Heart right ventricle (tissue), 16 donors: ENCODE measurements at regions of chr6 and their contacts with region 1.

Region 1: DNA sequence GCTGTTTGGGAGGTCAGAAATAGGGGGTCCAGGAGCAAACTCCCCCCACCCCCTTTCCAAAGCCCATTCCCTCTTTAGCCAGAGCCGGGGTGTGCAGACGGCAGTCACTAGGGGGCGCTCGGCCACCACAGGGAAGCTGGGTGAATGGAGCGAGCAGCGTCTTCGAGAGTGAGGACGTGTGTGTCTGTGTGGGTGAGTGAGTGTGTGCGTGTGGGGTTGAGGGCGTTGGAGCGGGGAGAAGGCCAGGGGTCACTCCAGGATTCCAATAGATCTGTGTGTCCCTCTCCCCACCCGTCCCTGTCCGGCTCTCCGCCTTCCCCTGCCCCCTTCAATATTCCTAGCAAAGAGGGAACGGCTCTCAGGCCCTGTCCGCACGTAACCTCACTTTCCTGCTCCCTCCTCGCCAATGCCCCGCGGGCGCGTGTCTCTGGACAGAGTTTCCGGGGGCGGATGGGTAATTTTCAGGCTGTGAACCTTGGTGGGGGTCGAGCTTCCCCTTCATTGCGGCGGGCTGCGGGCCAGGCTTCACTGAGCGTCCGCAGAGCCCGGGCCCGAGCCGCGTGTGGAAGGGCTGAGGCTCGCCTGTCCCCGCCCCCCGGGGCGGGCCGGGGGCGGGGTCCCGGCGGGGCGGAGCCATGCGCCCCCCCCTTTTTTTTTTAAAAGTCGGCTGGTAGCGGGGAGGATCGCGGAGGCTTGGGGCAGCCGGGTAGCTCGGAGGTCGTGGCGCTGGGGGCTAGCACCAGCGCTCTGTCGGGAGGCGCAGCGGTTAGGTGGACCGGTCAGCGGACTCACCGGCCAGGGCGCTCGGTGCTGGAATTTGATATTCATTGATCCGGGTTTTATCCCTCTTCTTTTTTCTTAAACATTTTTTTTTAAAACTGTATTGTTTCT is at the start of gene VEGFA:
- DNase-seq: peak; percentile 91 to 93
- ATAC-seq: peak; percentile 70 to 86 (median 80)
- H3K4me3 ChIP-seq: peak within 1 kb of the TSS; percentile 85 to 98 (median 94)
- H3K27ac ChIP-seq: peak within 1 kb of the TSS; percentile 86 to 99 (median 95)
- H3K4me1 ChIP-seq: peaks cover 3 to 45% (median 37%) of the 10 kb centered on the region in 9 donors
- H3K27me3 ChIP-seq: no peaks in the 10 kb centered on the region
- CTCF ChIP-seq: peak; percentile 94 to 99 (median 97)
- total RNA-seq, gene VEGFA: 163 to 456 (median 216) TPM

Region 2: GRCh38 chr6:43667245-43668150 is 102.3 kb before region 1 on chr6:
- intact Hi-C with region 1: loop called in 4 of 10 experiments (anchors 2 to 5 kb)
- DNase-seq: peak; percentile 83 to 85
- ATAC-seq: peak; percentile 49 to 75 (median 59)
- H3K4me3 ChIP-seq: peak overlapping the region in 3 of 10 donors; percentile 15 to 24 (median 22)
- H3K27ac ChIP-seq: peak overlapping the region in 8 of 10 donors; percentile 19 to 85 (median 80)
- H3K4me1 ChIP-seq: peaks cover 26 to 47% (median 41%) of the 10 kb centered on the region in 9 donors
- H3K27me3 ChIP-seq: no peaks in the 10 kb centered on the region
- CTCF ChIP-seq: peak; percentile 85 to 98 (median 95)

Region 3: GRCh38 chr6:43723737-43724295 is 46.0 kb before region 1 on chr6:
- intact Hi-C with region 1: loop called in 5 of 10 experiments (anchors 5 kb)
- DNase-seq: peak; percentile 60 to 65
- ATAC-seq: peak; percentile 71 to 87 (median 78)
- H3K4me3 ChIP-seq: no peak overlapping the region
- H3K27ac ChIP-seq: peak overlapping the region in 1 of 10 donors; percentile 26
- H3K4me1 ChIP-seq: peaks cover 0 to 28% (median 9%) of the 10 kb centered on the region in 9 donors
- H3K27me3 ChIP-seq: no peaks in the 10 kb centered on the region
- CTCF ChIP-seq: peak; percentile 41 to 77 (median 68)

Region 4: DNA sequence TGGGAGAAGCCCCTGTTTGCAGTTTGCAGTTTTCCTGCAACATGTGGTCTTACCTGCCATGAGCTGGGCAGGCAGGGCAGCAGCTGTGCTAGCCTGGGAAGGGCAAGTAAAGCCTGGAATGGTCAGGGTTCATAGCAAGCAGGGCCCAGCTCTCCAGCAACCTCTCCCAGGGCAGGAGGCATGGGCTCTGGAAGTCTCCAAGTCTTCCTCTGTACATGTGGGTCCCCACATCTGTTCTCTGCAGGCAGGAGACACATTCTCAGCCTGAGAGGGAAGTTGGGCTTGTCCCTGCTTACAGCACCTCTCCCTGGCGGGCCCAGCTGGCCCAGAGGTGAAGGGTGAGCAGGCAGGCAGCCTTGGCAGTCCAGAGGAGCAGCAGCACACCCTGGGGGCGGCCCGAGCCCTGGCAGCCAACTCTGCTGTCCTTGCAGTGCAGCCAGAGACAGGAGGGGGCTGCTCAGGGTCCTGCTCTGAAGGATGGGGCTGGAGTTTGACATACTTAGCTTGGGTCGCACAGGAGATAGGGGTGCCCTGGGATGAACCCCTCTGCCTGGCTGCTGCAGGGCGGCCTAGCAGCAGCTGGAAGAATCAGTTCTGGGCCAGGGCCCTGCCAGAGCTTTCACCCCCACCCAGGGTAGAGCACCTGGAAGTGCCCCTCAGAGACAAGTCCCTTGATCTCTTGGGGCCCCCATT is 181.4 kb after region 1 on chr6:
- intact Hi-C with region 1: loop called in 7 of 10 experiments (anchors 1 to 5 kb)
- DNase-seq: peak; percentile 45 to 68
- ATAC-seq: peak; percentile 52 to 76 (median 62)
- H3K4me3 ChIP-seq: no peak overlapping the region
- H3K27ac ChIP-seq: peak overlapping the region in 6 of 10 donors; percentile 11 to 92 (median 56)
- H3K4me1 ChIP-seq: peaks cover 0 to 48% (median 9%) of the 10 kb centered on the region in 9 donors
- H3K27me3 ChIP-seq: peaks cover 0 to 8% (median 0%) of the 10 kb centered on the region in 7 donors
- CTCF ChIP-seq: peak; percentile 22 to 65 (median 60)

Region 5: DNA sequence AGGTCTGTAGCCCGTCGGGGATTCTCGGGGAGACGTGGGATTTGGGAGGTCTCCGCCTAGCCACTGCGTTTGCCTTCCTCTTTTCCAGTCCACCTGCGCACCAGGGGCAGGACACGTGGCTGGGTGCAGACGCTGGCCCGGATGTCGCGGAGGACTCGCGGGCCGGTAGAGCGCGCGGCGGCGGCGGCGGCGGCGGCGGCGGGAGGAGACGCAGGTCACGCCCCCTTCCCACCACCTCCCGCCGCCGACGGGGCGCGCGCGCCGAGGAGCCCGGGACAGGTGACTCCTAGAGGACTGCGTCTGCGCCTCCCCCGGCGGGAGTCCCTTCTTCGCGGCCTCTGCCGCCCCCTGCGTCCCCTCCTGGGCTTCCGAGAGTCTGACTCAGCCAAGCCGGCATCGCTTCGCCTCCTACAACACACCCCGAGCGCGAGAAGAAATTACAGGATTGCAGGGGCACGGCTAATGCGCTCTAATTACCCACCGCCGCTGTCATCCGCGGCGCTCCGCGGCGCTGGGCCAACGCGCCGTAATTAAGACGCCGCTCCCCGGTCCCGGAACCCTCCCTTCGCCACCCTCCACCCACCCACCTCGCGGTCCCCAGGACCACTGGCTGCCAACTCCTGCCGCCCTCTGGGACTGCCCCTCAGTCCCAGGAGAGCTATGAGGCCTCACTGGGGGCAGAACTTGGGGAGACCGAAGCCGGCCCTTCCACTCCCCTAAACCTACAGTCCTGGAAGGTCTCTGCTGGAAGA is 233.0 kb after region 1 on chr6:
- intact Hi-C with region 1: loop called in 5 of 10 experiments (anchors 2 to 5 kb)
- DNase-seq: peak; percentile 44 to 64
- ATAC-seq: peak; percentile 15 to 59 (median 36)
- H3K4me3 ChIP-seq: peak overlapping the region; percentile 6 to 45 (median 40)
- H3K27ac ChIP-seq: peak overlapping the region in 9 of 10 donors; percentile 53 to 95 (median 90)
- H3K4me1 ChIP-seq: peaks cover 8 to 64% (median 25%) of the 10 kb centered on the region in 9 donors
- H3K27me3 ChIP-seq: peaks cover 0 to 75% (median 27%) of the 10 kb centered on the region in 7 donors
- CTCF ChIP-seq: peak in 4 of 9 donors; percentile 21 to 43 (median 34)